Activated CD4-positive, alpha-beta memory T cell treated with anti-CD3 and anti-CD28 coated beads for 36 hours (primary cell): ENCODE measurements at regions of chr10 and their contacts with region 1.

Region 1: GRCh38 chr10:4849555-4850242 is 23.7 kb downstream of the AKR1E2 start:
- DNase-seq: peak; percentile 93
- H3K4me3 Mint-ChIP-seq: no peak overlapping the region
- H3K27ac Mint-ChIP-seq: no peak overlapping the region
- H3K4me1 Mint-ChIP-seq: peaks cover 3% of the 10 kb centered on the region
- H3K27me3 Mint-ChIP-seq: no peaks in the 10 kb centered on the region

Region 2: DNA sequence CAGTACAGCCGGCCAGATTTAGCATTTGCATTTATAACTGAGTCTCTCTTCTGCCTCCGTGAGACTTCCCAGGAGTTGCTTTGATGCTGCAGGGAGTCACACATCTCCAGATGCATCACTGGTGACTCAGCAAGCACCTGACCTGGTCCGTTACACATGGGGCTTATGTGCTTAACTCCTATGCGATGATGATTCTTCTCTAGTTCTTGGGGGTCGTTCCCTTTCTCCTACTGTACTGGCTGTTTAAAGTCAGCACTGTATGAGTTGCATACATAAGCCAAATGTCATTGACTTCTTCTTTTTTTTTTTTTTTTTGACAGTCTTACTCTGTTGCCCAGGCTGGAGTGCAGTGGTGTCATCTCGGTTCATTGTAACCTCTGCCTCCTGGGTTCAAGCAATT is 36.7 kb before region 1 on chr10:
- CTCF ChIA-PET with region 1: interaction called, 44 read pairs
- POLR2A ChIA-PET with region 1: no interaction called
- intact Hi-C with region 1: loop called (anchors 1 kb)
- DNase-seq: no peak
- H3K4me3 Mint-ChIP-seq: no peak overlapping the region
- H3K27ac Mint-ChIP-seq: no peak overlapping the region
- H3K4me1 Mint-ChIP-seq: no peaks in the 10 kb centered on the region
- H3K27me3 Mint-ChIP-seq: peaks cover 5% of the 10 kb centered on the region

Region 3: DNA sequence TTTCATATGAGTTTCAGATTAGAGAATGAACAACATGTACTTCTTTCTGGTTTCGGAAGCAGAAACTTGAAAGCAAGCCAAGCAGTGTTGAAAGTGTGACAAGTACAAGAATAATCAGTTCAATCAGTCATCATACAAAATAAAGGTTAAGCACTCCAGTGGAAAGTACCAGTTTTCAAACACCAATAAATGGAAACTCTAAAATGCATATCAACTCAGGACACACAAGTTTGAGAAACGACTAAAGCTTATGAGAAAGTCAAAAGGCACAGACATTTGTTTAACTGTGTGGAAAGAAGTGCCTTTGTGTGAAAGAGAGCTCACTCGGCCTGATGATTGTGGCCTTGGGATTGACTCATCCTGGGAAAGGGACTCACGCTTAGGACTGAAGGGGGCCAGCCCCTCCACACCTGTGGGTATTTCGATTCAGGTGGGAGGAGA is 52.9 kb after region 1 on chr10:
- CTCF ChIA-PET with region 1: interaction called, 10 read pairs
- POLR2A ChIA-PET with region 1: no interaction called
- intact Hi-C with region 1: no loop called
- DNase-seq: peak; percentile 60
- H3K4me3 Mint-ChIP-seq: peak overlapping the region; percentile 27
- H3K27ac Mint-ChIP-seq: peak overlapping the region; percentile 70
- H3K4me1 Mint-ChIP-seq: peaks cover 19% of the 10 kb centered on the region
- H3K27me3 Mint-ChIP-seq: peaks cover 2% of the 10 kb centered on the region

Region 4: GRCh38 chr10:5283305-5284158 is 433.8 kb after region 1 on chr10:
- CTCF ChIA-PET with region 1: interaction called, 90 read pairs
- POLR2A ChIA-PET with region 1: no interaction called
- intact Hi-C with region 1: loop called (anchors 1 kb)
- DNase-seq: peak; percentile 78
- H3K4me3 Mint-ChIP-seq: no peak overlapping the region
- H3K27ac Mint-ChIP-seq: peak overlapping the region; percentile 83
- H3K4me1 Mint-ChIP-seq: peaks cover 34% of the 10 kb centered on the region
- H3K27me3 Mint-ChIP-seq: no peaks in the 10 kb centered on the region

Region 5: GRCh38 chr10:5385224-5385623 is 535.5 kb after region 1 on chr10:
- CTCF ChIA-PET with region 1: interaction called, 44 read pairs
- POLR2A ChIA-PET with region 1: no interaction called
- intact Hi-C with region 1: loop called (anchors 1 kb)
- DNase-seq: no peak
- H3K4me3 Mint-ChIP-seq: no peak overlapping the region
- H3K27ac Mint-ChIP-seq: no peak overlapping the region
- H3K4me1 Mint-ChIP-seq: no peaks in the 10 kb centered on the region
- H3K27me3 Mint-ChIP-seq: peaks cover 5% of the 10 kb centered on the region

Region 6: GRCh38 chr10:5623081-5623748 is 773.5 kb after region 1 on chr10:
- CTCF ChIA-PET with region 1: interaction called, 23 read pairs
- POLR2A ChIA-PET with region 1: no interaction called
- intact Hi-C with region 1: loop called (anchors 5 kb)
- DNase-seq: peak; percentile 90
- H3K4me3 Mint-ChIP-seq: no peak overlapping the region
- H3K27ac Mint-ChIP-seq: no peak overlapping the region
- H3K4me1 Mint-ChIP-seq: peaks cover 10% of the 10 kb centered on the region
- H3K27me3 Mint-ChIP-seq: peaks cover 1% of the 10 kb centered on the region